AG04450 (cell line): ENCODE measurements at regions of chr11 and their contacts with region 1.

Region 1: GRCh38 chr11:74702383-74703007 is 28.7 kb downstream of the CHRDL2 start:
- DNase-seq: peak; percentile 51
- H3K4me3 ChIP-seq: no peak overlapping the region
- H3K27ac ChIP-seq: no peak overlapping the region
- H3K27me3 ChIP-seq: peaks cover 2% of the 10 kb centered on the region
- CTCF ChIP-seq: peak; percentile 99

Region 2: DNA sequence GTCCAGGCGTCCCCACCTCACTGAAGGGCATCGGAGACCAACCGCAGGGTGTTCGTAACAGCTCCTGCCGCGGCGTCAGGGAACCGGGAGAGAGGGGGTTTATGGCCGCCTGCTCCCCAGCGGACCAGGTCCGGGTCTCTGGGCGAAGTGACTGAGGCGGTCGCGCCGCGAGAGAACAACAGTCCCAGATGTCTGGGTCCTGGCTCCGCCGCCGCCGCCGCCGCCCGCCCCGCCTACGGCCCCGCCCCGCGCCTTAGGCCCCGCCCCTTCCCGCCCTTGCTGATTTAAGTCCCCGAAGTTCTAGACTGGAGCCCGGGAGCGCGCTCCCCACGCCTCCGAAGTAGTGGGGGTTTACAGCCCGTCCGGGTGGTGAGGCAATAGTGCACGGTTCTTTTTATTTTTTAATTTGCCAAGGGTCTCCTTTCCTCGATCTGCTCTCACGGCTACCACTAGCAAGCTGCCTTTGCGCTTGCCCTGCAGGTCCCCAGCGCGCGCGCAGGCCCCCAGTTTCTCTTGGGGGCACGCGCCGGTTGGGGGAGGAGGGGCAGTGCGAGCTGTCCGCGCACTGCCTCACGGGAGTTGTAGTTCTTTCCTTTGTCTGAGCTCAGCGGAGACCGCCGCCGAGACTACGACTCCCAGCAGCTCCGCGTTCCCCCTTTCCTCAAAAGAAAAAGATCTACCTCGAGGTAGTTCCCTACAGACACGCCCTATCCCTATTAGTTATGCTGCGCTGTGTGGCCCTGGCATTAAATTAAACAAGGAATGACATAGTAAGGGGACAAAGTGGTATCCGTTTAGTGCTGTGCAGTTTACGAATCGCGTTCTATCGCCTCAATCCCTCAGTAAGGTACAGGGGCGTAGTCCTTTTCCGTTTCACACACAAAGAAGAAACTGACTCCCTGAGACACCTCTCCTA is 304.0 kb before region 1 on chr11 and contains the start of gene PGM2L1:
- CTCF ChIA-PET with region 1: no interaction called
- POLR2A ChIA-PET with region 1: no interaction called
- DNase-seq: peak; percentile 70
- H3K4me3 ChIP-seq: peak within 1 kb of the TSS; percentile 93
- H3K27ac ChIP-seq: peak within 1 kb of the TSS; percentile 68
- H3K27me3 ChIP-seq: no peaks in the 10 kb centered on the region
- CTCF ChIP-seq: no peak
- polyA plus RNA-seq, gene PGM2L1: 1.7 and 2.6 TPM in 2 replicates

Region 3: DNA sequence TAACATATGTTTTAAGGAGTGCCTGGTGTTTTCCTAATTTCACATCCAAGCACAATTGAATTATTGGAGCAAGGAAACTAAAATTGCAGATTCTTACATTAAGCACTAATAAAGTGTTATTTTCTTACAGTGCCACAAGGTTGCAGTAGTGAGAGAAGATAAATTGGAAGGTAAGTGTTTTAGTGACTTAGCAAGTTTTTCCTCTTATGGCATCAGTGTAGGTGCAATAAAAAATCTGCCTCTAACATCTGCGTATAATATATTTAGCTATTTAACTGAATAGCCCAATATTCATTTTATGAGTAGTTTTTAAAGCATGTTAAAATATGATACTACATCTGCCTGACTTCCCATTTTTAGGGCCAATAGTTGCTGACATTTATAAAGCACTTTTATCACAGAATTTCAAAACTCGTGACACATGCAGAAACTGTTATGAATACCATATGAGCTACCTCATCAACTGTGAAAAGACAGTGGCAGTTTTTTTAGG is 91.1 kb before region 1 on chr11:
- CTCF ChIA-PET with region 1: interaction called, 13 read pairs
- POLR2A ChIA-PET with region 1: no interaction called
- DNase-seq: peak; percentile 54
- H3K4me3 ChIP-seq: no peak overlapping the region
- H3K27ac ChIP-seq: no peak overlapping the region
- H3K27me3 ChIP-seq: no peaks in the 10 kb centered on the region
- CTCF ChIP-seq: peak; percentile 58

Region 4: DNA sequence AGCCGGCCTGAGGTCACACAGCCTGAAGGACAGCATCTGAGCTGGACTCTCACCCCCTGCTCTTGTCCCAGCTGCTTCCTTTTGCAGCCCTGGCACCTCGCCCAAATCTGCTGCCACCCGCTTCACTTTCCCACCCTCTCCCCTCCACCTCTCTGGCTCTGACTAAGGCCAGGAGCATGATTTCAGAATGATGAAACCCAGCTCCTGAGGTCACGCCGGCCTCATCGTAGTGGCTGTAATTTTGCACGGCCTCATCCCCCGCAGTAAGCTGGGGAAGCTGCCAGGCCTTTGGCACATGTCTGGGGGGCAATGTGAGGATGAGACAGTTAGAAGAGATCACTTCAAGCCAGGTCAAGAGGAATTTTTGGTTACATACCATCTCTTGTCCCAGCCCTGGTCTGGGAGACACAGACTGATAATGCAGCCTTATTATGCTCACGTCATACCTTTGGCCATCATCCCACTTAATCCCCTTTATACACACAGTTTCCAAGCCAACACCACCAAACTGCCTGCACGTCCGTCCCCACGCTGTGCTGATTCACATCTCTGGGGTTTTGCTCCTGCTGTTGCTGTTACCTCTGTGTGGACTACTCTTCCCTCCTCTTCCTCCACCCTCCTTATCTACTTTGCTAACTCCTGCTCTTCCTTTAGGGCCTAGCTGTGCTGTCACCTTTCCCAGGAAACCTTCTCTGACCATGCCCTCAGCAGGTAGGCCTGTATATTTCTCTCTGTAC is 29.4 kb before region 1 on chr11:
- CTCF ChIA-PET with region 1: interaction called, 11 read pairs
- POLR2A ChIA-PET with region 1: interaction called, 9 read pairs
- DNase-seq: peak; percentile 95
- H3K4me3 ChIP-seq: peak overlapping the region; percentile 33
- H3K27ac ChIP-seq: peak overlapping the region; percentile 99
- H3K27me3 ChIP-seq: no peaks in the 10 kb centered on the region
- CTCF ChIP-seq: no peak

Region 5: GRCh38 chr11:74720596-74721478 is 18.3 kb after region 1 on chr11:
- CTCF ChIA-PET with region 1: interaction called, 140 read pairs
- POLR2A ChIA-PET with region 1: interaction called, 11 read pairs
- DNase-seq: peak; percentile 81
- H3K4me3 ChIP-seq: no peak overlapping the region; the same call in 1 of the 2 replicates
- H3K27ac ChIP-seq: peak overlapping the region; percentile 91
- H3K27me3 ChIP-seq: no peaks in the 10 kb centered on the region
- CTCF ChIP-seq: no peak

Region 6: DNA sequence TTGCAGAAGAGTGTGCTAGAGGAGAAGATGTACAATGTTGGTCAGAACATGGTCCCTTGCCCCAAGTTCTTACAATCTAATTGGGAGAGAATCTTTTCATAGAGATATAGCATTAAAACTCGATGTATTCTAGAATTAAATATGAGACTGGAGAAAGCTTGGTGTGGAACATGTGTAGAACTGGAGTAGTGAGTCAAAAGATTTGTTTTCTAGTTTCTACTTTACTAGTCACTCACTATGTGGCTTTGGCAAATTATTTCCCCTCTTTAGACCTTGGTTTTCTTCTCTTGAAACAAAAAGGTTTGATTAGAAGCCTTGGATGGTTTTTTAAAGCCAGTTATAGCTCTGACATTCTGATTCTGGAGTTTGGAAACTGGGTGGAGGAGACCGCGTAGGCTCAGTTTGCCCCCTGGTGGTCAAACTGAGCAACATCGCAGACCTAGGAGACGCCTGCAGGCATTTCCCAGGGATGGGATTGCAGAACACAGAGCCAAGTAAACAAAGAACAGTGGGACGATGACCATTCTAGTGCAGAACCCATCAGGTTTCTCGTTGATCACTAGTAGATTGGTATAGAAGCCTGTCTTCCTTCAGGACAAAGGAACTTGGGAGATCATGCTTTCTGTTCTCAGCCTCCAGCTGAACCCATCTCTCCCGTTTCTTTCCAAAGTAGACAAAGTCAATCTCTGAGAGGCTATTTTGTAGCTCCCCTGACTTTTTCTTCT is 37.2 kb after region 1 on chr11:
- CTCF ChIA-PET with region 1: interaction called, 40 read pairs
- POLR2A ChIA-PET with region 1: interaction called, 3 read pairs
- DNase-seq: peak; percentile 44
- H3K4me3 ChIP-seq: no peak overlapping the region
- H3K27ac ChIP-seq: no peak overlapping the region
- H3K27me3 ChIP-seq: peaks cover 4% of the 10 kb centered on the region
- CTCF ChIP-seq: peak; percentile 90